ENCODE measurements at regions of chr1 and their contacts with region 1.

Region 1: DNA sequence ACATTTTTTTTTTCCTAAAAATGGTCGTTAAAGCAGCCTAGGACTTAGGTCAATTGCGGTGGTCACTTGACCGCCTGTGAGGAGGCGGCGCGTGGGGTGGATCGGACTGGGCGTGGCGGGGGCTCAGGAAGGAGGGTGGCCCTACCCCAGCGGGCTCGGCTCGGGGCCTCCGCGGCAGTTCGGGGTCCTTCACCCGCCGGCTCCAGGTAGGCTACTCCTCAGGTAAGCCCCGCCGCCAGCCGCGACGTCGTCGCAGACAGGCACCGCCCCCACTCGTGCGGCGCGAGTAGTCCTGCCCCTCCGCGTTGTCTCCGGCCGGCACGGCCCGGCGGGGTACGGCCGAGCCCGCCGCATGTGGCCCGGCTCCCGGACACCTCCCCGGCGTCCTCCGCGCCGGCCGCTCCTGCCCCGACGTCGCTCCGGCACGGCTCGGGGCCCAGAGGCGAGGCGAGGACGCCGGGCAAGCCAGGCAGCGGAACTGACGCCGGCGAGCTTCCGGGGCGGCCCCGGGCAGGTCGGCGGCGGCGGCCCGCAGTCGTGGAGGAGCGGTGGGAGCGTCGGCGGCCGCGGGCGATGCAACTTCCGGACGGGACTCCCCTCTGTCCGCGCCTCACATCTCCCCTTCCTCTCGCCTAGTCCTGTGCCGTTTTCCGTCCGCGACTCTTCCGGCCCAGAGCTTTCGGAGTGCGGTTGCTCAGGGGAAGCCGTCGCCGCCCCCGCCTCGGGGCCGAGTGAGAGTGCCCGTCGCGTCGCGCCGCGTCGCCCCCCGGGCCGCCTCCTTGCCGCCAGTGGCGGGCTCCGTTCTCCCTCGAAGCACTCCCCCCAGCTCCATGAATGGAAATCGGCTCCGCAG is at the start of gene AGO3:
- DNase-seq: peak; percentile 95
- ATAC-seq: peak; percentile 95
- H3K4me3 Mint-ChIP-seq: peak within 1 kb of the TSS; percentile 92
- H3K27ac Mint-ChIP-seq: peak within 1 kb of the TSS; percentile 94
- H3K4me1 Mint-ChIP-seq: peaks cover 37% of the 10 kb centered on the region
- H3K27me3 Mint-ChIP-seq: no peaks in the 10 kb centered on the region
- total RNA-seq, gene AGO3: 23.3 to 33.8 TPM

Region 2: DNA sequence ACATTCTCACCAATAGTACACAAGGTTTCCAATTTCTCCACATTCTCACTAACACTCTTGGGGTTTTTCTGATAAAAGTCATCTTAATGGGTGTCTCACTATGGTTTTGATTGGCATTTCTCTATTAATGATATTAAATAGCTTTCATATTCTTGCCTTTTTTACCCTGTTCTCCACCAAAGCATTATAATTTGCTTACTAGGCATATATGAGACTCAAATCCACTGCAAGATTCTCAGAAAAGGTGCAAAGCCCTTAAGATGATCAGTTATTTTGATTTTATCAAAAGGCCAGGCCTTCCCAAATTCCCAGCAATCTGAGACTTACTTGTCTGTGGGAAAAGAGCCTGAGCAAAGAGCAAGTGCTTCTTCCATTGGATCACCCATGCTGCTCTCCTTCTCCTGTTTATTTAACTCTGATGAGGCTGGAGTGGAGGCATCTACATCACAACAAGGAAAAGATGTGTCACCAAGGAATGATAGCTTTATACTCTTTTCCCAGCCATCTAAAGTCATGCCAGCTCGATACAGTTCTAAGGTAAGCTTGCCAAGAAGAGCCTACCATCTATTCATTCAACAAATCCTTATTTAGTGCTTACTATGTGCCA is 185.6 kb before region 1 on chr1:
- CTCF ChIA-PET with region 1: no interaction called
- POLR2A ChIA-PET with region 1: no interaction called
- intact Hi-C with region 1: no loop called
- DNase-seq: no peak
- ATAC-seq: no peak
- H3K4me3 Mint-ChIP-seq: no peak overlapping the region
- H3K27ac Mint-ChIP-seq: no peak overlapping the region
- H3K4me1 Mint-ChIP-seq: no peaks in the 10 kb centered on the region
- H3K27me3 Mint-ChIP-seq: no peaks in the 10 kb centered on the region

Region 3: GRCh38 chr1:35882945-35883634 is 47.7 kb before region 1 on chr1 and contains the start of gene AGO1:
- CTCF ChIA-PET with region 1: interaction called, 17 read pairs
- POLR2A ChIA-PET with region 1: interaction called, 6 read pairs
- intact Hi-C with region 1: loop called (anchors 1 kb)
- DNase-seq: peak; percentile 98
- ATAC-seq: peak; percentile 95
- H3K4me3 Mint-ChIP-seq: peak within 1 kb of the TSS; percentile 91
- H3K27ac Mint-ChIP-seq: peak within 1 kb of the TSS; percentile 73
- H3K4me1 Mint-ChIP-seq: peaks cover 46% of the 10 kb centered on the region
- H3K27me3 Mint-ChIP-seq: no peaks in the 10 kb centered on the region
- total RNA-seq, gene AGO1: 31.5 to 34.6 TPM

Region 4: GRCh38 chr1:36088575-36089443 is 158.0 kb after region 1 on chr1 and contains the start of gene ADPRS:
- CTCF ChIA-PET with region 1: interaction called, 3 read pairs
- POLR2A ChIA-PET with region 1: no interaction called
- intact Hi-C with region 1: loop called (anchors 1 kb)
- DNase-seq: peak; percentile 95
- ATAC-seq: peak; percentile 89
- H3K4me3 Mint-ChIP-seq: peak within 1 kb of the TSS; percentile 88
- H3K27ac Mint-ChIP-seq: peak within 1 kb of the TSS; percentile 96
- H3K4me1 Mint-ChIP-seq: peaks cover 19% of the 10 kb centered on the region
- H3K27me3 Mint-ChIP-seq: peaks cover 16% of the 10 kb centered on the region
- total RNA-seq, gene ADPRS: 34.0 to 43.9 TPM

Region 5: GRCh38 chr1:36306902-36307456 is 376.2 kb after region 1 on chr1:
- CTCF ChIA-PET with region 1: no interaction called
- POLR2A ChIA-PET with region 1: interaction called, 3 read pairs
- intact Hi-C with region 1: loop called in 1 of 2 experiments (anchors 2 kb)
- DNase-seq: peak; percentile 96
- ATAC-seq: peak; percentile 91
- H3K4me3 Mint-ChIP-seq: peak overlapping the region; percentile 98
- H3K27ac Mint-ChIP-seq: peak overlapping the region; percentile 96
- H3K4me1 Mint-ChIP-seq: peaks cover 45% of the 10 kb centered on the region
- H3K27me3 Mint-ChIP-seq: no peaks in the 10 kb centered on the region